Posterior vena cava (tissue), 2 donors: ENCODE measurements at regions of chr4 and their contacts with region 1.

Region 1: DNA sequence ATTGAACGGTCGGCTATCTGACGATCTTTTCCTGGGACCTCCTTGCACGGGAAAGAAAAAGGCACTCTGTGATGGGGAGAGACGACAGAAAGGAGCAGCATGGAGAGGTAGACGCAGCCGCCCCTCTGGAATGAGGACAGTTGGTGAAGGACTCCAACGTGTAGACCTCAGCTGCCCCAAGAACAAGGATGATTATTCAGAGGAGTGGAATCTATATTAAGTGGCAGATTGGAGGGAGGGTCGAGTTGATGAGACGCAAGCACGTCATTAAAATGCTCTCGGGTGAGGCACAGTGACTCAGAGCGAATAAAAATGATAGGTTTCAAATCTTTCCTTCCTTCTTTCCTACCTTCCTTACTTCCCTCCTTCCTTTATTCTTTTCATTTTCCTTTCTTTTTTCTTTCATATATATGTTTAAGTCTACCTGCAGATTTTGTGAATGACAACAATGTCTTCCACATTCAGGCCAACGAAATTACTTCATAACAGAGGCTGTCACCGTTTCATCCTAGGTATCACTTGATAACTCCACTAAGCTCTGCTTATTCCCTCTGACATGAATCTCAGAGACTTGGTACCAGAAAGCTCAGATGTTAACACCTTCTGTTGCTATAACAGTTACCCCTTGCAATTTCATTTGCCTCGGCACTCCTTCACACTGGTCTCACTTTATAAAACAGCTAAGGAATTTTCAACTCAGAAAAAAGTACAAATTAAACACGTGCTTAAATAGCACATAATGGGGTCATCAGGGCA is 110.0 kb upstream of the PPARGC1A start:
- DNase-seq: no peak

Region 2: GRCh38 chr4:23697722-23698121 is 302.2 kb before region 1 on chr4:
- intact Hi-C with region 1: no loop called
- DNase-seq: no peak

Region 3: GRCh38 chr4:23720556-23720955 is 279.3 kb before region 1 on chr4:
- intact Hi-C with region 1: loop called in 1 of 2 experiments (anchors 5 kb)
- DNase-seq: no peak